K562 (cell line): ENCODE measurements at regions of chr2 and their contacts with region 1.

Region 1: DNA sequence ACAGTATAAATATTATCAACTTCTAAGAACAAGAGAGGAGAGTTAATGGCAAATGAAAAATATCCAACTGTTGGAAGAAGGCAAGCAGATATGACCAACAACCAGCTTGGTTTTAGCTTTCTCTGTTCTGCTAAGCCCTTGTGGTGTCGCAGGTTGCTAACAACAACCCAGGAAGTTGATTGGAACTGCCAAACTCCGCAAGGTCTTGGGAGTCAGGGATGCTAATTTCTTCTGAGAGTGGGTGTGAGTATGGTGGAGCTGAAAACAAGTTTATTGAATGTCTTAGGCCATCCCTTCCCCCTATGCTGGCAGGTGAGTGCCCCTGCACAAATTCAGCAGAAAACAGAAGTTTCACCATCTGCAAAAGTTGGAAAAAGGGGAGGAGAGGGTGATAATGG is 17.5 kb downstream of the BZW1 start:
- DNase-seq: no peak
- ATAC-seq: no peak
- H3K4me3 ChIP-seq: no peak overlapping the region
- H3K27ac ChIP-seq: no peak overlapping the region
- H3K4me1 ChIP-seq: no peaks in the 10 kb centered on the region
- H3K27me3 ChIP-seq: no peaks in the 10 kb centered on the region
- CTCF ChIP-seq: no peak
- EP300 ChIP-seq: no peak
- POLR2A ChIP-seq: no peak
- RAD21 ChIP-seq: no peak

Region 2: GRCh38 chr2:200850512-200851256 is 21.4 kb after region 1 on chr2:
- CTCF ChIA-PET with region 1: no interaction called
- POLR2A ChIA-PET with region 1: interaction called, 10 read pairs
- in situ Hi-C with region 1: no loop called
- intact Hi-C with region 1: no loop called
- DNase-seq: peak in 3 of 4 experiments; percentile 12 to 61 (median 36)
- ATAC-seq: peak; percentile 82
- H3K4me3 ChIP-seq: no peak overlapping the region
- H3K27ac ChIP-seq: no peak overlapping the region
- H3K4me1 ChIP-seq: no peaks in the 10 kb centered on the region; a peak in 1 of 5 replicates
- H3K27me3 ChIP-seq: no peaks in the 10 kb centered on the region
- CTCF ChIP-seq: peak; percentile 36 to 46 (median 43); a peak in 2 of 6 replicates
- EP300 ChIP-seq: no peak
- POLR2A ChIP-seq: no peak
- RAD21 ChIP-seq: peak in 1 of 2 experiments; percentile 35; a peak in 1 of 4 replicates